ENCODE measurements at regions of chr17 and their contacts with region 1.

Region 1: GRCh38 chr17:74430706-74431567 is 951 bp upstream of the GPRC5C start:
- DNase-seq: peak; percentile 95
- ATAC-seq: peak; percentile 58
- H3K4me3 ChIP-seq: peak overlapping the region; percentile 82 to 94 (median 89)
- H3K27ac ChIP-seq: peak overlapping the region; percentile 98
- H3K4me1 ChIP-seq: peaks cover 69% of the 10 kb centered on the region
- H3K27me3 ChIP-seq: no peaks in the 10 kb centered on the region; a peak in 1 of 5 replicates
- CTCF ChIP-seq: peak; percentile 45
- EP300 ChIP-seq: peak in 1 of 2 experiments; percentile 55; a peak in 2 of 4 replicates
- POLR2A ChIP-seq: peak in 1 of 2 experiments; percentile 61; a peak in 3 of 4 replicates
- RAD21 ChIP-seq: peak; percentile 37

Region 2: DNA sequence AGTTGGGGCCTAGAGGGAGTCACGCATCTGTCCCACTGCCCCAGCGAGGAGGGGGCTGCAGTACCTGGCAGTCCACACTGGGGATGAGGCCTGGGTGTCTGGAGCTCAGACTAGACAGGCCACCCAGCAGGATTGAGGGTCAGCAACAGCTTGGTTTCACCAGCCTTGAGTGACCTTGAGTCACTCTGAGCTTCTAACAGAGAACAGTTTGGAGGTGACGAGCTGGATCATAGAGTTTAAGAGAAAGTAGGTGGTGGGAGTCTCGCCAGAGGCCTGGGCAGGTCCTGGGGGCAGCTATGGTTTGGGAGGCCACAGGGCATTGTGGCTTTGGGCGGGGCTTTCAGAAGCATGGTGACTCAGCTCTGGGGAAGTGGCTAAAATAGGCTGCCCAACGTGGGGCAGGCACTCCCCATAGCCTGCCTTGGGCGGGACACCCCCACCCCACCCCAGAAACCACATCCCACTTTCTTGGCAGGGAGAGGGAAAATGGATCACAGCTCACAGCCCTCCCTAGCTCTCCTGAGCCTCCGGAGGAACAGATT is 1139.6 kb before region 1 on chr17:
- CTCF ChIA-PET with region 1: no interaction called
- POLR2A ChIA-PET with region 1: no interaction called
- in situ Hi-C with region 1: loop called (anchors 25 kb)
- intact Hi-C with region 1: no loop called
- DNase-seq: no peak
- ATAC-seq: no peak
- H3K4me3 ChIP-seq: no peak overlapping the region; a peak in 1 of 6 replicates
- H3K27ac ChIP-seq: peak overlapping the region; percentile 15
- H3K4me1 ChIP-seq: peaks cover 95% of the 10 kb centered on the region
- H3K27me3 ChIP-seq: no peaks in the 10 kb centered on the region
- CTCF ChIP-seq: no peak; the same call in 1 of the 2 replicates
- EP300 ChIP-seq: no peak
- POLR2A ChIP-seq: no peak
- RAD21 ChIP-seq: no peak

Region 3: DNA sequence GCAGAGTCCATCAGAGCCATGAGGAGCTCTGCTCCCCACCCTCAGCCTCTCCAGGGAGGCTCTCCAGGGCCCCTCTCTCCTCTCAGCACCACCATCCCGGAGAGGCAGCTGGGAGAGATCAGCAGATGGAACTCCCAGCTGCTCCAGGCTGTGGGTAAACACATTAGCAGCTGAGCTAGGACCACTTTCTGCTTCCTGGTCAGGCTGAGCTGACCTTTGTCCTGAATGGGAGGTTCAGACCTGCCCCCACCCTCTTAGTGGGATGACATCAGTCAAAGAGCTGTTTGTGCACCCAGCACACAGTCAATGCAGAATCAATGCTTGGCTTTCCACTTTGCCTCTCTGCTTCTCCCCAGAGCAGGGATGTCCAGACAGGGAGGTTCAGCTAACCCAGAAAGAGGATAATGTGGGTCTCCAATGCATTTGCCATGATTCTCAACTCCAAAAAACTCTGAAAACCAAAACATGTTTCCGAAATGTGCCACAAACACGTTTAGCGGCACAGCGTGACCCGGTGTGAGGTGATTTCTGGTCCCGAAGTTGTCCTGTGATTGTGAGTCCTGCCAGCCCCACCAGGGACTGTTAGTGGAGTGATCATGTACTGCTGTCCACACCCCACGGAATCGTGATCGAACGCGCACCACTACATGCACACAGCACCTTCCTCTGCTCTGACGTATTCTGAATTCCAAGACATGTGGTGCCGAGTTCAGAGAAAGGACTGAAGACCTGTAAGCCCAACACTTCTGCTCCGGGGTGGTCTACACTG is 56.9 kb before region 1 on chr17:
- CTCF ChIA-PET with region 1: no interaction called
- POLR2A ChIA-PET with region 1: interaction called, 11 read pairs
- in situ Hi-C with region 1: no loop called
- intact Hi-C with region 1: no loop called
- DNase-seq: peak; percentile 95
- ATAC-seq: peak; percentile 97
- H3K4me3 ChIP-seq: peak overlapping the region in 1 of 3 experiments; percentile 24; a peak in 2 of 6 replicates
- H3K27ac ChIP-seq: no peak overlapping the region
- H3K4me1 ChIP-seq: peaks cover 21% of the 10 kb centered on the region
- H3K27me3 ChIP-seq: peaks cover 1 to 31% of the 10 kb centered on the region in 2 experiments; a peak in 4 of 5 replicates
- CTCF ChIP-seq: peak; percentile 42
- EP300 ChIP-seq: peak; percentile 66 to 69
- POLR2A ChIP-seq: no peak
- RAD21 ChIP-seq: peak; percentile 55; the same call in 1 of the 2 replicates

Region 4: GRCh38 chr17:74417178-74418045 is 13.5 kb before region 1 on chr17:
- CTCF ChIA-PET with region 1: no interaction called
- POLR2A ChIA-PET with region 1: interaction called, 159 read pairs
- in situ Hi-C with region 1: no loop called
- intact Hi-C with region 1: loop called (anchors 1 kb)
- DNase-seq: peak; percentile 89
- ATAC-seq: peak; percentile 85
- H3K4me3 ChIP-seq: peak overlapping the region; percentile 8 to 58 (median 19); a peak in 4 of 6 replicates
- H3K27ac ChIP-seq: peak overlapping the region; percentile 12
- H3K4me1 ChIP-seq: peaks cover 84% of the 10 kb centered on the region
- H3K27me3 ChIP-seq: peaks cover 0 to 7% of the 10 kb centered on the region in 2 experiments; a peak in 1 of 5 replicates
- CTCF ChIP-seq: no peak
- EP300 ChIP-seq: no peak; a peak in 1 of 4 replicates
- POLR2A ChIP-seq: peak in 1 of 2 experiments; percentile 52; a peak in 1 of 4 replicates
- RAD21 ChIP-seq: peak; percentile 18; the same call in 1 of the 2 replicates

Region 5: GRCh38 chr17:74467221-74467951 is 36.4 kb after region 1 on chr17:
- CTCF ChIA-PET with region 1: no interaction called
- POLR2A ChIA-PET with region 1: no interaction called
- in situ Hi-C with region 1: no loop called
- intact Hi-C with region 1: no loop called
- DNase-seq: no peak
- ATAC-seq: peak; percentile 50
- H3K4me3 ChIP-seq: no peak overlapping the region
- H3K27ac ChIP-seq: no peak overlapping the region
- H3K4me1 ChIP-seq: peaks cover 26% of the 10 kb centered on the region
- H3K27me3 ChIP-seq: peaks cover 0 to 12% of the 10 kb centered on the region in 2 experiments; a peak in 1 of 5 replicates
- CTCF ChIP-seq: no peak
- EP300 ChIP-seq: no peak
- POLR2A ChIP-seq: no peak
- RAD21 ChIP-seq: no peak

Region 6: GRCh38 chr17:74478420-74479100 is 47.6 kb after region 1 on chr17:
- CTCF ChIA-PET with region 1: no interaction called
- POLR2A ChIA-PET with region 1: no interaction called
- in situ Hi-C with region 1: no loop called
- intact Hi-C with region 1: no loop called
- DNase-seq: no peak
- ATAC-seq: no peak
- H3K4me3 ChIP-seq: no peak overlapping the region
- H3K27ac ChIP-seq: no peak overlapping the region
- H3K4me1 ChIP-seq: no peaks in the 10 kb centered on the region
- H3K27me3 ChIP-seq: peaks cover 9 to 46% of the 10 kb centered on the region in 2 experiments; a peak in 3 of 5 replicates
- CTCF ChIP-seq: no peak
- EP300 ChIP-seq: no peak
- POLR2A ChIP-seq: no peak
- RAD21 ChIP-seq: no peak

Region 7: GRCh38 chr17:74736513-74737298 is 305.8 kb after region 1 on chr17 and contains the start of gene RAB37:
- CTCF ChIA-PET with region 1: no interaction called
- POLR2A ChIA-PET with region 1: interaction called, 20 read pairs
- in situ Hi-C with region 1: no loop called
- intact Hi-C with region 1: no loop called
- DNase-seq: peak; percentile 99
- ATAC-seq: peak; percentile 82
- H3K4me3 ChIP-seq: peak within 1 kb of the TSS; percentile 39 to 78 (median 67)
- H3K27ac ChIP-seq: peak within 1 kb of the TSS; percentile 69
- H3K4me1 ChIP-seq: peaks cover 59% of the 10 kb centered on the region
- H3K27me3 ChIP-seq: peaks cover 8 to 37% of the 10 kb centered on the region in 2 experiments; a peak in 4 of 5 replicates
- CTCF ChIP-seq: peak; percentile 81
- EP300 ChIP-seq: peak; percentile 85 to 87
- POLR2A ChIP-seq: peak; percentile 42 to 71
- RAD21 ChIP-seq: peak; percentile 87
- total RNA-seq, gene RAB37: 0.91 and 1.1 TPM in 2 replicates

Measured in HepG2 (cell line).